GM12878 (cell line): ENCODE measurements at regions of chr6 and their contacts with region 1.

Region 1: DNA sequence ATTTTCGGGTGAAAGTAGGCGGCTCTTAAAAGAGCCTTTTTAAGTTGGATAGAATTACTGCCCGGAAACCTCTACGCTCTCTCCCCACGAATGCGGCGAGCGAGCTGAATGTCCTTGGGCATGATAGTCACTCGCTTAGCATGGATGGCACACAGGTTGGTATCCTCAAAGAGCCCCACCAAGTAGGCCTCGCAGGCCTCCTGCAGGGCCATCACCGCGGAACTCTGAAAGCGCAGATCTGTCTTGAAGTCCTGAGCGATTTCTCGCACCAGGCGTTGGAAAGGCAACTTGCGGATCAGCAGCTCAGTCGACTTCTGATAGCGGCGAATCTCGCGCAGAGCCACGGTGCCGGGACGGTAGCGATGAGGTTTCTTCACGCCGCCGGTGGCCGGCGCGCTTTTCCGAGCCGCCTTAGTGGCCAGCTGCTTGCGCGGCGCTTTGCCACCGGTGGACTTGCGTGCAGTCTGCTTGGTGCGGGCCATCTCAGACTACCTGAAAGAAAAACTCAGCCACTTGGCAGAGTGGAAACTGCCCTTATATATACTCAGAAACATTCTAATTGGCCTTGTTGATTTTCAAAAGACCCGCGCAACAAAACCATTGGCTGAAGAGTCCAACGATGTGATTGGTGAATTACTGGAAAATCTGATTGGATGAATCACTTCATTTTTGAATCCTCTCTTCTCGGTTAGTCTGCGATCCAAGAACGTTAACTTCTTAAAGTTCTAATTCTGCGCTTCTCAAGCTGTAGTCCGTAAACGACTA is 93.9 kb upstream of the BTN3A2 start:
- DNase-seq: peak; percentile 98
- ATAC-seq: peak; percentile 57
- H3K4me3 ChIP-seq: peak overlapping the region; percentile 72
- H3K27ac ChIP-seq: peak overlapping the region; percentile 96
- H3K4me1 ChIP-seq: peaks cover 3% of the 10 kb centered on the region
- H3K27me3 ChIP-seq: no peaks in the 10 kb centered on the region
- CTCF ChIP-seq: no peak
- EP300 ChIP-seq: no peak
- POLR2A ChIP-seq: peak; percentile 95
- RAD21 ChIP-seq: no peak

Region 2: DNA sequence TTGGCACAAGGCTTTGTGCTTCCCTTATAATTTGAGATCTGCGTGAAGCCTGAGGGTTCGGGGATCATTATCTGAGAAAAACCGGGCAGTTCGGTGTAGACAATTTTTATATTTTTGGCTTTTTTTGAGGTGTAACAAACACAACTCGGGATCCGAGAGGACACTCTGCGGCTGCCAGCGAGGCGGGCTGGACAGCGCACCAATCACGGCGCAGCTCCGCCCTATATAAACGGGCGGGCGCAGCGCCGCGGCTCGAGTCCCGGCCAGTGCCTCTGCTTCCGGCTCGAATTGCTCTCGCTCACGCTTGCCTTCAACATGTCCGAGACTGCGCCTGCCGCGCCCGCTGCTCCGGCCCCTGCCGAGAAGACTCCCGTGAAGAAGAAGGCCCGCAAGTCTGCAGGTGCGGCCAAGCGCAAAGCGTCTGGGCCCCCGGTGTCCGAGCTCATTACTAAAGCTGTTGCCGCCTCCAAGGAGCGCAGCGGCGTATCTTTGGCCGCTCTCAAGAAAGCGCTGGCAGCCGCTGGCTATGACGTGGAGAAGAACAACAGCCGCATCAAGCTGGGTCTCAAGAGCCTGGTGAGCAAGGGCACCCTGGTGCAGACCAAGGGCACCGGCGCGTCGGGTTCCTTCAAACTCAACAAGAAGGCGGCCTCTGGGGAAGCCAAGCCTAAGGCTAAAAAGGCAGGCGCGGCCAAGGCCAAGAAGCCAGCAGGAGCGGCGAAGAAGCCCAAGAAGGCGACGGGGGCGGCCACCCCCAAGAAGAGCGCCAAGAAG is 114.8 kb before region 1 on chr6:
- CTCF ChIA-PET with region 1: no interaction called
- POLR2A ChIA-PET with region 1: interaction called, 16 read pairs
- RAD21 ChIA-PET with region 1: no interaction called
- SMC1A ChIA-PET with region 1: no interaction called
- in situ Hi-C with region 1: no loop called
- intact Hi-C with region 1: no loop called
- DNase-seq: peak; percentile 90
- ATAC-seq: peak; percentile 65
- H3K4me3 ChIP-seq: peak overlapping the region; percentile 88
- H3K27ac ChIP-seq: peak overlapping the region; percentile 94
- H3K4me1 ChIP-seq: peaks cover 11% of the 10 kb centered on the region
- H3K27me3 ChIP-seq: no peaks in the 10 kb centered on the region
- CTCF ChIP-seq: no peak
- EP300 ChIP-seq: no peak; a peak in 1 of 4 replicates
- POLR2A ChIP-seq: peak; percentile 93
- RAD21 ChIP-seq: no peak

Region 3: GRCh38 chr6:26216356-26216885 is 54.7 kb before region 1 on chr6:
- CTCF ChIA-PET with region 1: interaction called, 9 read pairs
- POLR2A ChIA-PET with region 1: interaction called, 18 read pairs
- RAD21 ChIA-PET with region 1: interaction called, 32 read pairs
- SMC1A ChIA-PET with region 1: interaction called, 21 read pairs
- in situ Hi-C with region 1: no loop called
- intact Hi-C with region 1: loop called (anchors 2 kb)
- DNase-seq: peak; percentile 100
- ATAC-seq: peak; percentile 77
- H3K4me3 ChIP-seq: peak overlapping the region; percentile 75
- H3K27ac ChIP-seq: peak overlapping the region; percentile 93
- H3K4me1 ChIP-seq: peaks cover 12% of the 10 kb centered on the region
- H3K27me3 ChIP-seq: no peaks in the 10 kb centered on the region
- CTCF ChIP-seq: no peak
- EP300 ChIP-seq: no peak
- POLR2A ChIP-seq: peak; percentile 84
- RAD21 ChIP-seq: 0 out of 2 replicates have a peak, but pooled peaks have one; percentile 3

Region 4: GRCh38 chr6:26258200-26258977 is 12.7 kb before region 1 on chr6:
- CTCF ChIA-PET with region 1: interaction called, 131 read pairs
- POLR2A ChIA-PET with region 1: interaction called, 14 read pairs
- RAD21 ChIA-PET with region 1: interaction called, 19 read pairs
- SMC1A ChIA-PET with region 1: interaction called, 33 read pairs
- in situ Hi-C with region 1: no loop called
- intact Hi-C with region 1: no loop called
- DNase-seq: no peak
- ATAC-seq: peak; percentile 69
- H3K4me3 ChIP-seq: no peak overlapping the region
- H3K27ac ChIP-seq: no peak overlapping the region
- H3K4me1 ChIP-seq: peaks cover 2% of the 10 kb centered on the region; the same call in 1 of the 2 replicates
- H3K27me3 ChIP-seq: no peaks in the 10 kb centered on the region
- CTCF ChIP-seq: peak; percentile 23 to 34 (median 29); a peak in 4 of 6 replicates
- EP300 ChIP-seq: no peak
- POLR2A ChIP-seq: no peak
- RAD21 ChIP-seq: 0 out of 2 replicates have a peak, but pooled peaks have one; percentile 9

Region 5: DNA sequence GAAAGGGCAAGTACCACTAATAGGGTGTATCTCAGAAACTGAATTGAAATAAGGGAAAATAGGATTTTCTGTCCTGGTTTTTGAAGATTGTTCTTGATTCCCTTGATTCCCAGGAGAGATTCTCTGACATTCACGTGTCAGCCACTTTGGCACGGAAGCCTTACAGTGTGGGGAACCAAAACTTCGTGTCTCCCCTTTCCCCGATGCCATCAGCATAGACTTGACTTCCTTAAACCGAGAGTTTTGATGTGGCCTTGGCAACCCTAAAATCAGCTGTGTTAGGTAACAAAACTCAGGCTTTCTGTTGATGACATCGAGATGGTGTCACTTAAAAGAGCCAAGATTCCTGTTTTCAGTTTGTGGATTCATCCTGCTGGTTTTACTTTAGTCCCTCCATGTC is 274.5 kb after region 1 on chr6:
- CTCF ChIA-PET with region 1: no interaction called
- POLR2A ChIA-PET with region 1: no interaction called
- RAD21 ChIA-PET with region 1: no interaction called
- SMC1A ChIA-PET with region 1: no interaction called
- in situ Hi-C with region 1: no loop called
- intact Hi-C with region 1: no loop called
- DNase-seq: no peak
- ATAC-seq: no peak
- H3K4me3 ChIP-seq: no peak overlapping the region
- H3K27ac ChIP-seq: no peak overlapping the region
- H3K4me1 ChIP-seq: no peaks in the 10 kb centered on the region
- H3K27me3 ChIP-seq: no peaks in the 10 kb centered on the region
- CTCF ChIP-seq: no peak
- EP300 ChIP-seq: no peak
- POLR2A ChIP-seq: no peak
- RAD21 ChIP-seq: no peak

Region 6: GRCh38 chr6:27132532-27133280 is 861.6 kb after region 1 on chr6:
- CTCF ChIA-PET with region 1: no interaction called
- POLR2A ChIA-PET with region 1: no interaction called
- RAD21 ChIA-PET with region 1: no interaction called
- SMC1A ChIA-PET with region 1: no interaction called
- in situ Hi-C with region 1: loop called (anchors 5 kb)
- intact Hi-C with region 1: loop called (anchors 1 kb)
- DNase-seq: peak; percentile 100
- ATAC-seq: peak; percentile 72
- H3K4me3 ChIP-seq: peak overlapping the region; percentile 65
- H3K27ac ChIP-seq: peak overlapping the region; percentile 94
- H3K4me1 ChIP-seq: peaks cover 22% of the 10 kb centered on the region
- H3K27me3 ChIP-seq: no peaks in the 10 kb centered on the region
- CTCF ChIP-seq: no peak
- EP300 ChIP-seq: peak in 1 of 2 experiments; percentile 20; a peak in 1 of 4 replicates
- POLR2A ChIP-seq: peak; percentile 93
- RAD21 ChIP-seq: no peak